WTC11 (cell line): ENCODE measurements at regions of chr7 and their contacts with region 1.

Region 1: GRCh38 chr7:31058122-31058521 is 6.0 kb downstream of the ADCYAP1R1 start:
- DNase-seq: no peak
- ATAC-seq: no peak
- H3K4me3 Mint-ChIP-seq: no peak overlapping the region
- H3K27ac Mint-ChIP-seq: no peak overlapping the region
- H3K4me1 Mint-ChIP-seq: peaks cover 34% of the 10 kb centered on the region
- H3K27me3 Mint-ChIP-seq: peaks cover 15% of the 10 kb centered on the region
- CTCF ChIP-seq: no peak

Region 2: GRCh38 chr7:30963805-30964204 is 94.3 kb before region 1 on chr7 and contains the start of gene GHRHR:
- CTCF ChIA-PET with region 1: no interaction called
- POLR2A ChIA-PET with region 1: no interaction called
- DNase-seq: no peak
- ATAC-seq: no peak
- H3K4me3 Mint-ChIP-seq: no peak within 1 kb of the TSS
- H3K27ac Mint-ChIP-seq: no peak within 1 kb of the TSS
- H3K4me1 Mint-ChIP-seq: peaks cover 4% of the 10 kb centered on the region; the same call in 1 of the 2 replicates
- H3K27me3 Mint-ChIP-seq: peaks cover 3% of the 10 kb centered on the region
- CTCF ChIP-seq: no peak
- total RNA-seq, gene GHRHR: 4.0 to 6.6 TPM (median 5.0 TPM) in 3 replicates

Region 3: GRCh38 chr7:31027161-31027965 is 30.8 kb before region 1 on chr7:
- CTCF ChIA-PET with region 1: interaction called, 15 read pairs
- POLR2A ChIA-PET with region 1: no interaction called
- DNase-seq: peak; percentile 56
- ATAC-seq: peak; percentile 76
- H3K4me3 Mint-ChIP-seq: no peak overlapping the region
- H3K27ac Mint-ChIP-seq: no peak overlapping the region
- H3K4me1 Mint-ChIP-seq: peaks cover 30% of the 10 kb centered on the region
- H3K27me3 Mint-ChIP-seq: peaks cover 1% of the 10 kb centered on the region; the same call in 1 of the 2 replicates
- CTCF ChIP-seq: no peak

Region 4: GRCh38 chr7:31043051-31043471 is 15.1 kb before region 1 on chr7:
- CTCF ChIA-PET with region 1: interaction called, 15 read pairs
- POLR2A ChIA-PET with region 1: no interaction called
- DNase-seq: peak; percentile 48
- ATAC-seq: peak; percentile 97
- H3K4me3 Mint-ChIP-seq: no peak overlapping the region
- H3K27ac Mint-ChIP-seq: no peak overlapping the region; the same call in 1 of the 2 replicates
- H3K4me1 Mint-ChIP-seq: peaks cover 25% of the 10 kb centered on the region
- H3K27me3 Mint-ChIP-seq: peaks cover 14% of the 10 kb centered on the region; the same call in 1 of the 2 replicates
- CTCF ChIP-seq: no peak

Region 5: DNA sequence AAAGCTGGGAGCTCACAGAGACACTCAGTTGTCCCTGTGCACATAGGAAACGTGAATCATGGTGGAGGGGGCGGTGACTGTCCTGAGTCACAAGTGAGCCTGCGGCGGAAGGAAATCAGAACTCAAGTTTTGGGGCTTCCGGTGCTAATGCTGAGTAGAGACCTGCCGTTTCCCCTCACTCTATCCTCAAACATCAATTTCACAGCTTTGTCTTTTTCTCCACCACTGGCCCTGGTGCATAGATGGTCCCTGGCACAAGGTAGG is 15.9 kb after region 1 on chr7:
- CTCF ChIA-PET with region 1: interaction called, 17 read pairs
- POLR2A ChIA-PET with region 1: no interaction called
- DNase-seq: no peak
- ATAC-seq: no peak
- H3K4me3 Mint-ChIP-seq: no peak overlapping the region
- H3K27ac Mint-ChIP-seq: no peak overlapping the region
- H3K4me1 Mint-ChIP-seq: peaks cover 10% of the 10 kb centered on the region
- H3K27me3 Mint-ChIP-seq: no peaks in the 10 kb centered on the region
- CTCF ChIP-seq: no peak

Region 6: GRCh38 chr7:31100445-31100844 is 42.3 kb after region 1 on chr7:
- CTCF ChIA-PET with region 1: interaction called, 11 read pairs
- POLR2A ChIA-PET with region 1: no interaction called
- DNase-seq: no peak
- ATAC-seq: no peak
- H3K4me3 Mint-ChIP-seq: no peak overlapping the region
- H3K27ac Mint-ChIP-seq: no peak overlapping the region
- H3K4me1 Mint-ChIP-seq: no peaks in the 10 kb centered on the region
- H3K27me3 Mint-ChIP-seq: no peaks in the 10 kb centered on the region
- CTCF ChIP-seq: no peak

Region 7: DNA sequence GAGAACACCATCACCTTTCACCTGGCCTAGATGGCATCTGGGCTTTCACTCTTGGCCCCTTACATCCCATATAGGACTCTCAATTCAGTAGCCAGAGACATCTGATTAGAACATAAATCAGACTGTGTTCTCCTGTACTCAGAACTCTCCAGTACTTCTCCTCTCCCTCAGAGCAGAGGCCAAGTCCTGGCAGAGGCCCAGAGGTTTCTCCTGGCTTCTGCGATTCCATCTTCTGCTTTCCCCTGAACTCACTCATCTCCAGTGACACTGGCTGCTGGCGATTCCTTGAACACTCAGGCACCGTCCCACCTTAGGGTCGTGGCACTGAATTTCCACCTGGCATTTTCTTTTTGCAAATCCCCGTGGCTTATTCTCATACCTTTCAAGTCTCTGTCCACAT is 287.3 kb after region 1 on chr7:
- CTCF ChIA-PET with region 1: no interaction called
- POLR2A ChIA-PET with region 1: no interaction called
- DNase-seq: no peak
- ATAC-seq: no peak
- H3K4me3 Mint-ChIP-seq: no peak overlapping the region
- H3K27ac Mint-ChIP-seq: no peak overlapping the region
- H3K4me1 Mint-ChIP-seq: no peaks in the 10 kb centered on the region
- H3K27me3 Mint-ChIP-seq: peaks cover 4% of the 10 kb centered on the region; the same call in 1 of the 2 replicates
- CTCF ChIP-seq: no peak